GM12878 (cell line): ENCODE measurements at regions of chrX and their contacts with region 1.

Region 1: GRCh38 chrX:79259073-79259689 is 108.0 kb downstream of the ITM2A start:
- DNase-seq: peak; percentile 99
- ATAC-seq: peak; percentile 89
- H3K4me3 ChIP-seq: peak overlapping the region; percentile 30; the same call in 1 of the 2 replicates
- H3K27ac ChIP-seq: peak overlapping the region; percentile 87
- H3K4me1 ChIP-seq: peaks cover 21% of the 10 kb centered on the region; the same call in 1 of the 2 replicates
- H3K27me3 ChIP-seq: no peaks in the 10 kb centered on the region
- CTCF ChIP-seq: no peak
- EP300 ChIP-seq: peak; percentile 79 to 84; a peak in 3 of 4 replicates
- POLR2A ChIP-seq: no peak
- RAD21 ChIP-seq: peak; percentile 20; the same call in 1 of the 2 replicates

Region 2: GRCh38 chrX:78957768-78958130 is 301.4 kb before region 1 on chrX:
- CTCF ChIA-PET with region 1: interaction called, 3 read pairs
- POLR2A ChIA-PET with region 1: no interaction called
- RAD21 ChIA-PET with region 1: interaction called, 14 read pairs
- SMC1A ChIA-PET with region 1: interaction called, 5 read pairs
- in situ Hi-C with region 1: no loop called
- intact Hi-C with region 1: no loop called
- DNase-seq: peak; percentile 93
- ATAC-seq: peak; percentile 84
- H3K4me3 ChIP-seq: peak overlapping the region; percentile 49; the same call in 1 of the 2 replicates
- H3K27ac ChIP-seq: peak overlapping the region; percentile 86
- H3K4me1 ChIP-seq: peaks cover 28% of the 10 kb centered on the region
- H3K27me3 ChIP-seq: no peaks in the 10 kb centered on the region
- CTCF ChIP-seq: no peak
- EP300 ChIP-seq: peak; percentile 72 to 97; a peak in 3 of 4 replicates
- POLR2A ChIP-seq: no peak
- RAD21 ChIP-seq: no peak

Region 3: DNA sequence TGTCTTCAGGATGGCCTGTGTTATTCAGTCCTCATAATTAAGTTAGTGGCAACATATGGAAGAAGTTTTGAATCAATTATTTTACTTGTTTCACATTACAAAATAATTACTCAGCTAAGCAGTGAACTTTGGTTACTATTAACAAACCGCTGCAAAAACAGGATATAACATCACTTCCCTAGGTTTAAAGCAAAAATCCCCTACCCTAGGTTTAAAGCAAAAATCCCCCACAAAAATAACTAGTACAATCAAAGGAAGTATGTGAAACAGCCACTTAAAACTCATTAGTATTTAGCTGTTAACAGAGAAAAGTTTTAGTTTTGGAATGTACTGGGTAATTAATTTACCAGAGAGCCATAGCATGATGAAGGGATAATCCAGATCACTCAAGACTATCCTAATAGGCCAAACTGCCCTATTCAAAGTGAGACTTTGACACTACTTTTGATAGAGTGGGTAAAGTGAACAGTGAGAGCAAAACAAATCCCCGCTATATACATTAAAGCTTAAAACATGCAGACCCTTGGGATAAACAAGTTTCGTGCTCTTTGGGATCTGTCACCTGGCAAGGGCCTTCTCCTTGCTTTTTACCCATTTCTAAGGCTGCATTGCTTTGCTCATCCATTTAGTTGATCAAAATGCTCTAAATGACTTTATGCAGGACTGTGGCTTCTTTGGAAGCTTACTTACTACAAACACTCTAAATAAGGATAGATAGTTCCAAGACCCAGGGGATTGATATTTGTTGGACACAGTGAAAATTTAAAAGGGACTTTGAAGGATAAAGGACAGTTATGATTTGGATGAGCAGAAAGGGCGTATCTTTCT is 151.1 kb before region 1 on chrX:
- CTCF ChIA-PET with region 1: no interaction called
- POLR2A ChIA-PET with region 1: no interaction called
- RAD21 ChIA-PET with region 1: interaction called, 10 read pairs
- SMC1A ChIA-PET with region 1: interaction called, 29 read pairs
- in situ Hi-C with region 1: no loop called
- intact Hi-C with region 1: no loop called
- DNase-seq: peak; percentile 55
- ATAC-seq: peak; percentile 91
- H3K4me3 ChIP-seq: no peak overlapping the region
- H3K27ac ChIP-seq: peak overlapping the region; percentile 24
- H3K4me1 ChIP-seq: peaks cover 8% of the 10 kb centered on the region; the same call in 1 of the 2 replicates
- H3K27me3 ChIP-seq: no peaks in the 10 kb centered on the region
- CTCF ChIP-seq: no peak
- EP300 ChIP-seq: peak; percentile 58 to 80; a peak in 2 of 4 replicates
- POLR2A ChIP-seq: no peak
- RAD21 ChIP-seq: no peak

Region 4: DNA sequence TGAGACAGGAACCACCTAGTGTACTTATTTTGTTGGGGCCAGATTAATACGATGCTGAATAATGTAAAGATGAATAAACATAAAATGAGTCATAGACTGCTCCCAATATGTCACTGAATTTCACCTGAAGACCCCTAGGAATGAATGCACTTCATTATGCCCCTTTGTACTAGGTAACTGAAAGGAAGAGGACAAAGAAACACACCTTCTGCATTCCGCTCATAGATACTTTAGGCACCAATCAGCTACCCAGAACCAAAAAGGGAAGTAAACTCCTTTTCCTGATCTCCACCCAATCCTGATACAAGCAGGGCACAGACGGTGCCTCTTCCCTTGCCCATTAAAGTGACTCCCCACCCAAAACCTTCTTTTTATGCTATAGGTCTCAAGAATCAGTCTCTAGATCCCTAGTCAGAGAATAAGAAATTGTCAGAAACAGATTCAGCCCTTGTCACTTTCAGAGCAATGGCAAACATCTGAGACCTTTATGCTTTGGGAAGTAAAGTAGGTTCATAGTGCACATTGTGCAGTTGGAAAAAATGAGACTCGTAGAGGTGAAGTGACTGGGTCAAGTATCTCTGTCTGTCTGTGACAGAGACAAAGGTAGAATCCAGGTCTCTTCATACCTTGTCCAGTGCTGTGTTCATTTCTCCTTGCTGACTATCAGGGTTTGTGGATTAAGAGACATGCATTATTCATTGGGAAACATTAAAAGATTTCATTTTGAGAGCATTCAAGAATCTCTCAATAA is 112.4 kb before region 1 on chrX:
- CTCF ChIA-PET with region 1: interaction called, 4 read pairs
- POLR2A ChIA-PET with region 1: interaction called, 9 read pairs
- RAD21 ChIA-PET with region 1: interaction called, 22 read pairs
- SMC1A ChIA-PET with region 1: interaction called, 41 read pairs
- in situ Hi-C with region 1: no loop called
- intact Hi-C with region 1: loop called (anchors 2 kb)
- DNase-seq: peak; percentile 45
- ATAC-seq: peak; percentile 52
- H3K4me3 ChIP-seq: peak overlapping the region; percentile 39
- H3K27ac ChIP-seq: peak overlapping the region; percentile 73
- H3K4me1 ChIP-seq: peaks cover 8% of the 10 kb centered on the region
- H3K27me3 ChIP-seq: no peaks in the 10 kb centered on the region
- CTCF ChIP-seq: no peak
- EP300 ChIP-seq: no peak
- POLR2A ChIP-seq: no peak
- RAD21 ChIP-seq: no peak

Region 5: DNA sequence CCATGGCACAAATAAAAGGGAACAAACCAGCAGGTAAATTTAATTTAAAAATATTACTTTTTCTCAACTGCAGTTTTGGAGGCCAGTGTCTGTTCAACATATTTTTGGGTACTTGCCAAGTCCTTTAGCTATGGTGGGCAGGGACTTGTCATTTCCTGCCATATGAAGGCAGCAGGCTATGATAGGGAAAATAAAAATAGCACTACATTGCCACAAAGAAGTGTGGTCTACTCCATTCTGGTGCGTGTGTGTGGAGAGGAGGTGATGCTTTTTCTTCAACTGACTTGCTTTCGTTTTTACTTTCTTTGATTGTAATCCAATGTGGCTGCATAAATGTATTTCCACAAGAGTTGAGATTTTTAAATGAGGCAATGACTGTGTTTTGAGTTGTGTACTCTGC is 97.5 kb before region 1 on chrX:
- CTCF ChIA-PET with region 1: interaction called, 6 read pairs
- POLR2A ChIA-PET with region 1: interaction called, 12 read pairs
- RAD21 ChIA-PET with region 1: interaction called, 21 read pairs
- SMC1A ChIA-PET with region 1: interaction called, 32 read pairs
- in situ Hi-C with region 1: no loop called
- intact Hi-C with region 1: loop called (anchors 5 kb)
- DNase-seq: peak; percentile 72
- ATAC-seq: peak; percentile 85
- H3K4me3 ChIP-seq: no peak overlapping the region
- H3K27ac ChIP-seq: peak overlapping the region; percentile 1; the same call in 1 of the 2 replicates
- H3K4me1 ChIP-seq: peaks cover 3% of the 10 kb centered on the region
- H3K27me3 ChIP-seq: no peaks in the 10 kb centered on the region
- CTCF ChIP-seq: no peak
- EP300 ChIP-seq: peak in 1 of 2 experiments; percentile 27; a peak in 2 of 4 replicates
- POLR2A ChIP-seq: no peak
- RAD21 ChIP-seq: no peak

Region 6: GRCh38 chrX:79182616-79183015 is 76.6 kb before region 1 on chrX:
- CTCF ChIA-PET with region 1: interaction called, 5 read pairs
- POLR2A ChIA-PET with region 1: interaction called, 18 read pairs
- RAD21 ChIA-PET with region 1: interaction called, 74 read pairs
- SMC1A ChIA-PET with region 1: interaction called, 63 read pairs
- in situ Hi-C with region 1: loop called (anchors 5 kb)
- intact Hi-C with region 1: loop called (anchors 1 kb)
- DNase-seq: peak; percentile 84
- ATAC-seq: peak; percentile 93
- H3K4me3 ChIP-seq: no peak overlapping the region
- H3K27ac ChIP-seq: peak overlapping the region; percentile 57
- H3K4me1 ChIP-seq: peaks cover 12% of the 10 kb centered on the region; the same call in 1 of the 2 replicates
- H3K27me3 ChIP-seq: no peaks in the 10 kb centered on the region
- CTCF ChIP-seq: no peak
- EP300 ChIP-seq: peak; percentile 94
- POLR2A ChIP-seq: no peak
- RAD21 ChIP-seq: 0 out of 2 replicates have a peak, but pooled peaks have one; percentile 17

Region 7: DNA sequence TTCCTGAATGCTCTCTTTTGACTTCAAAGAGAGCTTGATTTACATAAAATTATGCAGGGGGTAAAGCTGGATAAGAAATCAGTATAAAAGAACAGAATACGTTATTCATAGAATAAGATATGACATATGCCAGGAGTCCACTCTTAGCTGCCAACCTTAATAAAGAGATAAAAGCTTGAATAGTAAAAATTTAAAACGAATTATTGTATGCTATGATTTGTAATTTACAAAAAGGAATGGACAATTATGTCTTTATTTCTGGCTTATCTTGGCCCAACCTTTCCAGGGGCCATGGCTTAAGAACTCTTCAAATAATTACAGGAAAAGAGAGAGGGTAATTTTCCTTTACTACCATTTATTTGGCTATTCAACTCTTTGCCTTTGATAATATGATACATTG is 300.1 kb after region 1 on chrX:
- CTCF ChIA-PET with region 1: no interaction called
- POLR2A ChIA-PET with region 1: no interaction called
- RAD21 ChIA-PET with region 1: no interaction called
- SMC1A ChIA-PET with region 1: no interaction called
- in situ Hi-C with region 1: no loop called
- intact Hi-C with region 1: no loop called
- DNase-seq: no peak
- ATAC-seq: no peak
- H3K4me3 ChIP-seq: no peak overlapping the region
- H3K27ac ChIP-seq: no peak overlapping the region
- H3K4me1 ChIP-seq: no peaks in the 10 kb centered on the region
- H3K27me3 ChIP-seq: no peaks in the 10 kb centered on the region
- CTCF ChIP-seq: no peak
- EP300 ChIP-seq: no peak
- POLR2A ChIP-seq: no peak
- RAD21 ChIP-seq: no peak